IMR-90 (cell line): ENCODE measurements at regions of chr5 and their contacts with region 1.

Region 1: DNA sequence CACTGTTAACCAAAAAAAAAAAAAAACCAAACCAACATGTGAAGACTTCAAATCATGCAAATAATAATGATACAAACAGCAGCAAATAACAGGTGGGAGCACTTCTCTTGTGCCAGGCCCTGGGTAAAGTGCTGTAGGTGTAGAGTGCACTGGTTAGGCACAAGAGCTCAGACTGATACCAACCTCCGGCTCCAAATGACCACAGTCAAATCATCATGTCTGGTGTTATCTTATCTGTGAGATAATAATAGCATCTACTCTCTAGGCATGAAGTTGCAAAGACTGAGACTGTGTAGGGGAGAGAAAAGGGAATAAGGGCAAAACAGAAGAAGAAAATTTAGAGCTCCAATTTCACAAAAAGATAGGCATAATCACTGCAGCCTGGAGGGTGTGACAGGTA is 159.5 kb downstream of the ARL15 start:
- DNase-seq: no peak
- ATAC-seq: no peak
- H3K4me3 ChIP-seq: no peak overlapping the region
- H3K27ac ChIP-seq: no peak overlapping the region
- H3K4me1 ChIP-seq: no peaks in the 10 kb centered on the region
- H3K27me3 ChIP-seq: no peaks in the 10 kb centered on the region
- CTCF ChIP-seq: no peak
- POLR2A ChIP-seq: no peak
- RAD21 ChIP-seq: no peak

Region 2: DNA sequence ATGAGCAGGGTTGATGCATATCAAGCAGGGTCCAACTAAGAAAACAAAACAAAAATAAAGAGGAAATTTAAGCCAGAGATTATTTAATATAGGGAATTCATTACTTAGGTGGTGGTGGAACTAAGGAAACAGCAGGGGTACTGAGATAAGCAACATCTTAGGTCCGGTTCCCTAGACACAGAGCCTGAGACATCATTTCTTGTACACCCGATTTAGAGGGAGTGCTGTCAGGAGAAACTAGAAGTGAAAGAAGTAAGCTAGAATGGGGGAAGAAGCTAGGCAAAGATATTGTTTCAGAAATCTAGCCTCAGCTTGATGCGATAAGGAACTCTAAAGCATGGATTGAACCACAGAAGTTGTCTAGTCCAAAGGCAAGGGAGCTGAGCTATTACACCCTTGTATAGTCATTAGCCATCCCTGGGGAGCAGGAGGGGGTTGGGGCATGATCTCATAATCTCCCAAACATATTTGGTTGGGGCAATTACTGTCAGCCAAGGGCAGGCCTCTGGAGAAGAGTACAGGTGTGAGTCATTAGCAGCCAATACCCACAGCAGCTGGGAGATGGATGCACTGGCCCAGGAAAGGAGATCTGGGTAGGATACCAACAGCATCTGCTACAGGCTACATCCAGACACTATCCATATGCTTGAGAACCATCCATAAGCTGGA is 35.0 kb before region 1 on chr5:
- CTCF ChIA-PET with region 1: no interaction called
- POLR2A ChIA-PET with region 1: no interaction called
- dilution Hi-C with region 1: no loop called
- in situ Hi-C with region 1: no loop called
- intact Hi-C with region 1: loop called (anchors 5 kb)
- DNase-seq: peak; percentile 36
- ATAC-seq: peak; percentile 48
- H3K4me3 ChIP-seq: no peak overlapping the region
- H3K27ac ChIP-seq: no peak overlapping the region
- H3K4me1 ChIP-seq: peaks cover 6% of the 10 kb centered on the region
- H3K27me3 ChIP-seq: no peaks in the 10 kb centered on the region
- CTCF ChIP-seq: no peak
- POLR2A ChIP-seq: no peak
- RAD21 ChIP-seq: no peak